Left ventricle myocardium inferior (tissue), 1 donor: ENCODE measurements at regions of chr15 and their contacts with region 1.

Region 1: GRCh38 chr15:23877502-23878412 is 190.7 kb upstream of the NDN start:
- DNase-seq: peak; percentile 25
- H3K4me3 ChIP-seq: no peak overlapping the region
- H3K27ac ChIP-seq: no peak overlapping the region
- H3K4me1 ChIP-seq: no peaks in the 10 kb centered on the region
- H3K27me3 ChIP-seq: peaks cover 12% of the 10 kb centered on the region
- CTCF ChIP-seq: peak; percentile 72

Region 2: GRCh38 chr15:23642413-23643044 is 235.2 kb before region 1 on chr15:
- intact Hi-C with region 1: loop called (anchors 10 kb)
- DNase-seq: peak; percentile 38
- H3K4me3 ChIP-seq: no peak overlapping the region
- H3K27ac ChIP-seq: no peak overlapping the region
- H3K4me1 ChIP-seq: no peaks in the 10 kb centered on the region
- H3K27me3 ChIP-seq: peaks cover 66% of the 10 kb centered on the region
- CTCF ChIP-seq: peak; percentile 87

Region 3: DNA sequence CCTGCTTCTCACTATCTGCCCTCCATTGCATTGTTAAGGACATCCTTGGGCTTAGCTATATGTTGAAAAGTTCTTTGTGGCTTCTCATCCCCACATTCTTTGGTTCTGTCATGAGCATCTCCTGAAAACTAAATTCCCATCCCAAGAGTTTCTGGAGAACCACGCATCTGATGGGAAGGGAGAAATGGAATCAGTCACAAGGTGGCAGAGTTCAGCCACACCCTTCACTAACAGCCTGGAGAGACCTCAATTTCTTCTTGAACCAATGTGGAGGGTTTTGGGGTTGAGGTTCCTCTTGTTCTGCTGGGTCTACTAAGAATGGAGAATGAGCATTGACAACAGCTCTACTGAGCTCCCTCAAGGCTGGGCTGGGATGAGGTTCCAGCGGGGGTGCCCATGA is 214.5 kb before region 1 on chr15:
- intact Hi-C with region 1: no loop called
- DNase-seq: no peak
- H3K4me3 ChIP-seq: no peak overlapping the region
- H3K27ac ChIP-seq: no peak overlapping the region
- H3K4me1 ChIP-seq: no peaks in the 10 kb centered on the region
- H3K27me3 ChIP-seq: peaks cover 33% of the 10 kb centered on the region
- CTCF ChIP-seq: no peak